ENCODE measurements at regions of chr11 and their contacts with region 1.

Region 1: DNA sequence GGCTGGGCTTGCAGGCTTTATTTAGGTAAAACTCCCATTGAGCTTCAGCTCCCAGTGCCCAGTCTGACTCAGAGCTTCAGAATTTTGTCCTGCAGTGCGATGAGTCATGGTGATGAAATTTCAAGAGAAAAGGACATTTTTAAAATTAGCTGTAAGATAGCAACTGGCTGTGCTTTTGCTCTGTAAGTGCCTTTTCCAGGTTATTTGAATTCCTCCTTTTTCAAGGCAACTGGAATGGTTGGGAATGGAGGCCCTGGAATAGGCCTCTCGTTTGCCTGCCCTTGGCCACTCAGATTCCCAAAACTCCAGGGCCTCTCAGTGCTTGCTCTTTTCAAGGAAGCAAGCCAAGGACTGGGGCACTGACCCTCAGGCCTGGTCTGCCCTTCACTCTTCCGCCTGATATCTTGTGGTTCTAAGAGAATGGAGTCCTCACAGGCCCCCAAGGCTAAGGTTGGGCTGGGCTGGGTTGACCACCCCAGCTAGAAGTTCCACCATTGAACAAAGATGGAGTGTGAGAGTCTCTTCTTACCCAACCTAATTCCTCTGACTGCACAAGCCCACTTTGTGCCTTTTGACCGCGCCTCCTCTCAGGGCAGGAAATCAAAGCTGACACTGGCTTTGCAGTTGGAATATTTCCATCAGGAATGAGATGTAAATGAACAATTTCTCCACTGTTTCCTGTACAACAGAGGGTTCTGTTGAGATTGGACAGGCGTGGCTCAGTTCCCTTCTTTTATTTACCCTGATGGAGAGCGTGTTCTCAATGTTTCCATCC is 59.4 kb upstream of the PRSS23 start:
- DNase-seq: peak in 1 of 2 donors; percentile 77
- ATAC-seq: peak; percentile 71
- H3K4me3 ChIP-seq: no peak overlapping the region
- H3K27ac ChIP-seq: peak overlapping the region; percentile 87 to 98
- H3K4me1 ChIP-seq: peaks cover 3 to 21% of the 10 kb centered on the region in 2 donors
- H3K27me3 ChIP-seq: no peaks in the 10 kb centered on the region

Region 2: GRCh38 chr11:86632499-86633269 is 108.2 kb before region 1 on chr11:
- intact Hi-C with region 1: loop called in 1 of 2 experiments (anchors 5 kb)
- DNase-seq: peak; percentile 83 to 85
- ATAC-seq: no peak
- H3K4me3 ChIP-seq: no peak overlapping the region
- H3K27ac ChIP-seq: no peak overlapping the region
- H3K4me1 ChIP-seq: peaks cover 6 to 7% of the 10 kb centered on the region in 2 donors
- H3K27me3 ChIP-seq: no peaks in the 10 kb centered on the region

Region 3: GRCh38 chr11:86644291-86644690 is 96.6 kb before region 1 on chr11:
- intact Hi-C with region 1: loop called in 1 of 2 experiments (anchors 5 kb)
- DNase-seq: no peak
- ATAC-seq: no peak
- H3K4me3 ChIP-seq: no peak overlapping the region
- H3K27ac ChIP-seq: no peak overlapping the region
- H3K4me1 ChIP-seq: peaks cover 4 to 5% of the 10 kb centered on the region in 2 donors
- H3K27me3 ChIP-seq: no peaks in the 10 kb centered on the region

Region 4: DNA sequence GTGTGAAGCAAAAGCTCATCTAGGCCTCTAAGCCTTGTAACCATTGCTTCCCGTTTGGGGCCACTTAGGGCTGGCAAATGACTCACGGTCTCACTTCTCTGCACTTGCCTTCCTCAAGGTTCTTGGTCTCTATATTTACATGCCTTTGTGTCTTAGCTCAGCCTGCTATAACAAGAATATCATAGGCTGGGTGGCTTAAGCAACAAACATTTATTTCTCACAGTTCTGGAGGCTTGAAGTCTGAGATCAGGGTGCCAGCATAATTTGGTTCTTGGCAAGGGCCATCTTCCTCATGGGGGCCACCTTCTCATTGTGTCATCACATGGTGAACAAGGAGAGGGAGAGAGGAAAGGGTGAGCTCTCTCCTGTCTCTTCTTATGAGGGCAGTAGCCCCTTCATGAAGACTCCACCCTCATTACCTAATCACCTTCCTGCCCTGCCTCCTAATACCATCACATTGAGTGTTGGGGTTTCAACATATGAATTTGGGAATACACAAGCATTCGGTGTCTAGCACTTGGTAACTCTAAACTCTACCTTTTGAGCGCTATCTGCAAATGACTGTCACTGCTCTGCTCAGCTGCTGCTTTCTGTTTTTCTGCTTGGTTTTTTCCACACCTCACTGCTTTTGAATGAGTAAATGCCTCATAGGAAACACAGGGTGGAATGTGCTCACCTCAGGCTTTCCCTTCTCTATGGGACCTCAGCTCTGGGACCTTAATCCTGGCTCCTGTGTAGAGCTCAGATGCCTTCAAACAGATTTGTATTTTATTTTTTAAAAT is 52.3 kb before region 1 on chr11:
- intact Hi-C with region 1: loop called (anchors 2 to 5 kb)
- DNase-seq: peak in 1 of 2 donors; percentile 53
- ATAC-seq: peak; percentile 57
- H3K4me3 ChIP-seq: no peak overlapping the region
- H3K27ac ChIP-seq: peak overlapping the region in 1 of 2 donors; percentile 97
- H3K4me1 ChIP-seq: peaks cover 4 to 7% of the 10 kb centered on the region in 2 donors
- H3K27me3 ChIP-seq: no peaks in the 10 kb centered on the region

Region 5: GRCh38 chr11:86784241-86784681 is 43.4 kb after region 1 on chr11:
- intact Hi-C with region 1: no loop called
- DNase-seq: no peak
- ATAC-seq: no peak
- H3K4me3 ChIP-seq: no peak overlapping the region
- H3K27ac ChIP-seq: no peak overlapping the region
- H3K4me1 ChIP-seq: no peaks in the 10 kb centered on the region
- H3K27me3 ChIP-seq: no peaks in the 10 kb centered on the region

Region 6: GRCh38 chr11:86802601-86803051 is 61.7 kb after region 1 on chr11:
- intact Hi-C with region 1: loop called (anchors 2 to 5 kb)
- DNase-seq: no peak
- ATAC-seq: no peak
- H3K4me3 ChIP-seq: peak overlapping the region in 1 of 2 donors; percentile 75
- H3K27ac ChIP-seq: peak overlapping the region in 1 of 2 donors; percentile 17
- H3K4me1 ChIP-seq: peaks cover 0 to 4% of the 10 kb centered on the region in 2 donors
- H3K27me3 ChIP-seq: no peaks in the 10 kb centered on the region

Region 7: DNA sequence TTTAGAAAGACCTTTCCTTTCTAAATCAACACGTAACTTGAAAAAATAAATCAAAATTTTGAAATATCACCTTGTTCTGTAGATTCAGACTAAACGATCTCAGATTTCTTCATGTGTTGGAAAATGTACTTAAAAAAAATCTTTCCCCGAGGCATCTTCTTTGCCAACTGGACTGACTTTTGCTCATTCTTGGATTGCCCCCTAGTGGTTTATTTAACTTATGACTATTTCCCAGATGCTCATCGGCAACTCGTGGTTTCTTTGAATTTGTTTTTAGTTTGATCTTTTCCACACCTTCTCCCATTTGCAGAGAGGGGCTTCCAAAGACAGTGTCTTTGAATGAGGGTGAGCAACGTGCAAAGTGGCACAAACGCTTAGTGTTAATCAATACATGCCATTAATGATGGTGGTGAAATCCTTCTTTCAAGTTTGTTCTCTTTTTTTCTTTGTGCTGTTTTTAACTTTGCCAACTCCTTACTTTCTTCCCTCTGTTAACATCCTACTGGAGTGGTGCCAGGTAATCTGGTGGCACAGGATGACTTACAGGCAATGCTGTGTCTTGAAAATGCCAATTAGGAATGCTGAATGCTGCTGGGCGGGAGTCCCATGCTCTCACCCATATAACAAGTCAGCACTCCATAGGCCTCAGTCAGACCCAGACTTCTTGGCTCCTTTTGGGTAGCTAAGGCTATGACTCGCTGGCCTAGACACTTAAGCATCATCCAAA is 77.7 kb after region 1 on chr11:
- intact Hi-C with region 1: loop called in 1 of 2 experiments (anchors 5 kb)
- DNase-seq: no peak
- ATAC-seq: peak; percentile 66
- H3K4me3 ChIP-seq: no peak overlapping the region
- H3K27ac ChIP-seq: no peak overlapping the region
- H3K4me1 ChIP-seq: peaks cover 3 to 8% of the 10 kb centered on the region in 2 donors
- H3K27me3 ChIP-seq: no peaks in the 10 kb centered on the region

Measured in aorta (tissue), 5 donors.